Left cardiac atrium (tissue), 4 donors: ENCODE measurements at regions of chr17 and their contacts with region 1.

Region 1: GRCh38 chr17:37818689-37819088 is 73.8 kb upstream of the HNF1B start:
- DNase-seq: no peak
- ATAC-seq: peak in 1 of 2 donors; percentile 56

Region 2: DNA sequence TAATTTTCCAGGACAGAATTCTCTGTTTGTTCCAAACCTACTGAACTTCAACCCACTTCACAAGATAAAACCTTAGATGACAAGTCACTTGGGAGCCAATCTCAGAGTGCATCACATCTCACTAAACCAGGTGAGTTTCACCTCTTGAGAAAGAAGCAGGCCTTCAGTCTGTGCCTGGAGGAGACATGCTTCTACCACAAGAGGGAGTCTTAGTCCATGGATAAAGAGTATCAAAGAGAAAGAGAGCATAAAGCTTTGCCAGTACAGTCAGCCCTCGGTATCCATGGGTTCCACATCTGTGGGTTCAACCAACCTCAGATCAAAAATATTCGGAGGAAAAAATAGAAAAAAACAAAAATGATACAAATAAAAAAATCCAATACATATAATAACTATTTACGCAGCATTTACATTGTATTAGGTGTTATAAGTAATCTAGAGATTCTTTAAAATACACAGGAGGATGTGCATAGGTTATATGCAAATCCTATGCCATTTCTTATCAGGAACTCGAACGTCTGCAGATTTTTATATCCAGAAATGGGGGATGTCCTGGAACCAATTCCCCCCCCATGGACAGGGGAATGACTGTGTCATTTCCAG is 291.3 kb before region 1 on chr17:
- intact Hi-C with region 1: loop called in 1 of 2 experiments (anchors 10 kb)
- DNase-seq: no peak
- ATAC-seq: peak; percentile 46 to 77

Region 3: GRCh38 chr17:37650419-37651003 is 168.2 kb before region 1 on chr17:
- intact Hi-C with region 1: loop called in 1 of 2 experiments (anchors 5 kb)
- DNase-seq: no peak
- ATAC-seq: peak; percentile 45 to 53